ENCODE measurements at regions of chr2 and their contacts with region 1.

Region 1: DNA sequence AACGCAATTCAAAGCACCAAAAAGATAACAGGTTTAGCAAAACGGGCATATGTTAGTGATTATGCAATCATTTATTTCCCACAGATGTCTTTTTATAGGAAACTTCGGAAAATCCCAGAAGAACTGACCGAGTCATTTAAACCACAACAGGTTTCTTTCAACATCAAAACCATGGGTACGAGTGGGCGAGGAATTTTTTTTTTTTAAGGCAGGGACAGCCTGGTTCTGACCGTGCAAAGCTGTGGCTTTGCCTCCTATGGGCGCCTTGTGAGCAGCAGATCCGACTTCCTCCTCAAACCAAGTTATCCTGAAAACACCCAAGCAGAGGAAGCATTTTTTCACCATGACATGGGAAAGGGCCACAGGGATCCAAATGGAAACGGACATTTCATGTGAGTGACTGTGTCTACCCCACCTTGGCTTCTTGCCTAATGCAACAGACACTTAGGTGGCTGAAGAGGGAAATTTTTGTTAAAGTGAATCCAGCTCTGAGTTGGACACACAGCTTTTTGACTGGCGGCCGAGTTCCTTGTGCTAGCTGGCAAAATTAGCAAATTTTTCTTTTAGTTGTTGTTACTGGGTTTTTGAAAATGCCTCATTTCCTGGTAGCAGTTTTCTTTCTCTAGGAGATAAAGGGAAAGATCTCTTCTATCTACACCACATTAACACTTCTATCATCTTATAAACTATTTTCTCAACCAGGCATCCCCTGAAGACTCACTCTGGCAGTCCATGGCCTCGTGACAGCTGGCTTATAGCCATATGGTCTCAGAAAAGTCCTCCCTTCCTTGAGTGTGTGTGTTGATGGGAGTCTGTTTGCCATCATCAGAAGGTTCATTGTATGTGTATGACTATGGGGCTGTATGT is 487.4 kb upstream of the ZEB2 start:
- DNase-seq: peak; percentile 73

Region 2: DNA sequence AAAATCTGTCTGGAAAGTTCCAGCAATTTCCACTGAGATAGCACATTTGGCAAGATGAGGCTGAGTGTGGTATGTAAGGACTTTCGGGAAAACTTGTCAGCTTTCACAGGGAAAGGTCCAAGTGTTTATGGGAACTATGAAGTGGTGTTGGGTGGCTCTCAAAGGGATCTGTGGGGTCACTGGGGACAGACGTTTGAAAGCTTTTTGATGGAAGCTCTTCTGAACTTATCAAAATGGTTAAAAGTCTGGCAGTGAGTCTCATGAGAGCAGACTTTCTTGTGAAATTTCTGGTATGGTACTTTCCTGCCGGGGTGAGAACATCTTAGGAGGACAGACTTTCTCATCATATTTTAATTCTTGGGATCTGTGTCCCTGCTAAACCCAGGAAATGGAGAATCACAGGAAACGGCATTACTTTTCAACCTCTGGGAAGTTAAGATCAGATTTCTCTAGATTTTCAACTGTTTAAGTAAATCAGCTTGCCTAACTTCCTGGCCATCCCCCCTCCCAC is 58.9 kb after region 1 on chr2:
- intact Hi-C with region 1: loop called (anchors 5 kb)
- DNase-seq: no peak

Region 3: DNA sequence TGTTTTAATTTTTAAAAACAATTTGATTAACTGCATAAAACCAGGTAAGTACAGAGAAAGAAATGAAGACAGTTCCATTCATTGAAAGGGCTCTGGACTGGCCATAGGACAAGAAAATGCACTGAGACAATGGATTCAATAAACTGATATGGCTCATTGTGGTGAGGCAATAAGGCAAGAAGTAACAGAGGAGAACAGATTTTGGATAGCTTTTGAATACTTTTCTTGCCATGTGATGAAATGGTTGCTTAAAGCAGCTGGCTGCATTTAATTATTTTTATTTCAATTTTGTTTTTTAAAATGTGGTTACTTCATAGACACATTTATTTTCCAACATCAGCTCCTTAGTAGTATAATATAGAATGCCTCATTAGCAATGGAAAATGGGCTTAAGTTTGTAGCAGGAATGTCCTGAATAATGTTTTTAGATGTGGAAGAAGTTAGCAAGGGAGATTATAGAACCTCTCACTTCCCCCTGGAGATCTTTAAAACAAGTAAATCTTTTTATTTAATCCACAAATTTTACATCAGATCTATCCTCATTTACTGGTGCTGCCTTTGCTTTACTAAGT is 159.5 kb after region 1 on chr2:
- intact Hi-C with region 1: loop called (anchors 10 kb)
- DNase-seq: no peak